ENCODE measurements at regions of chr5 and their contacts with region 1.

Region 1: DNA sequence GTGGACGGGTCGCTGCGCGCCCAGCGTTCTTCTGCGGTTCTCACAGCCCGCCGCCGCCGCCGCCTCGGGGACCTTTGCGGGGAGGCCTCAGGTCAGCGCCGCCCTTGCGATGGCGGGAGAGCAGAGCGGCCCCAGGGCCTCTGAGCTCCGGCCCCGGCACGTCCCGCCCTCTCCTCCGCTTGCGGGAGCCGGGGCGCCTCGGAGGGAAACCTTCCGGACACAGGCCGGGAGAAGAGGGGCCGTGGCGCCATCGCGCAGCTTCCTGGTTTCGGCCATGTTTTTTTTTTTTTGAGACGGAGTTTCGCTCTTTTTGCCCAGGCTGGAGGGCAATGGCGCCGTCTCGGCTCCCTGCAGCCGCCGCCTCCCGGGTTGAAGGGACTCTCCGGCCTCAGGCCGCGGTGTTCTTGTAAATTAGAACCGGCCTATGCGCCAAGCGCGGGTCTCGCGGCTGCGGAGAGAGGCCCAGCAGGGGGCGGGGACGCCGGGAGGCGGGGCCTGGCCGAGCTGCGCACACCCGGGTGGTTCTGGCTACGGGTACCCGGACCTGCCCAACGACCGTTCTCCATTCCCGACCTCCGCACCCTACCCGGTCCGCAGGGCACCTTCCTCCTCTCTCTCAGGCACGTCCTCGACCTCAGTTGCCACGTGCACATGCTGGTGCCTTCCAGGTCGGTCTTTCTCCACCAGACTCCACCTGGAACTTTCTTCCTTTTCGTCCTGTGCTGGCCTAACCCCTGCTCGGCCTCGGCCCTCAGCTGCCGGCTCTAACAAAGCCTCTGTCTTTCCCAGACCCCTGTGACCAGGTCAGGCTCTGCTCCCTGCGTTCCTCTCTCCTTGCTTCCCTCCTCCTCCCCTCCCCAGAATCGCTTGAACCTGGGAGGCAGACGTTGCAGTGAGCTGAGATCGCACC is 28.8 kb upstream of the MGAT1 start:
- DNase-seq: peak; percentile 57 to 86 (median 75)
- ATAC-seq: peak; percentile 45
- H3K4me3 ChIP-seq: peak overlapping the region; percentile 92
- H3K4me3 Mint-ChIP-seq: peak overlapping the region; percentile 99
- H3K27ac ChIP-seq: peak overlapping the region; percentile 94 to 96
- H3K27ac Mint-ChIP-seq: peak overlapping the region; percentile 99
- H3K4me1 ChIP-seq: peaks cover 54% of the 10 kb centered on the region
- H3K4me1 Mint-ChIP-seq: peaks cover 63% of the 10 kb centered on the region
- H3K27me3 ChIP-seq: no peaks in the 10 kb centered on the region
- H3K27me3 Mint-ChIP-seq: no peaks in the 10 kb centered on the region
- CTCF ChIP-seq: no peak

Region 2: GRCh38 chr5:180784497-180785097 is 46.8 kb before region 1 on chr5:
- CTCF ChIA-PET with region 1: interaction called, 14 read pairs
- POLR2A ChIA-PET with region 1: interaction called, 40 read pairs
- intact Hi-C with region 1: loop called (anchors 2 to 10 kb)
- DNase-seq: peak; percentile 59 to 86 (median 74)
- ATAC-seq: peak; percentile 90
- H3K4me3 ChIP-seq: no peak overlapping the region
- H3K4me3 Mint-ChIP-seq: no peak overlapping the region
- H3K27ac ChIP-seq: no peak overlapping the region
- H3K27ac Mint-ChIP-seq: peak overlapping the region; percentile 85
- H3K4me1 ChIP-seq: peaks cover 31% of the 10 kb centered on the region
- H3K4me1 Mint-ChIP-seq: peaks cover 45% of the 10 kb centered on the region
- H3K27me3 ChIP-seq: no peaks in the 10 kb centered on the region
- H3K27me3 Mint-ChIP-seq: no peaks in the 10 kb centered on the region
- CTCF ChIP-seq: peak; percentile 69

Region 3: DNA sequence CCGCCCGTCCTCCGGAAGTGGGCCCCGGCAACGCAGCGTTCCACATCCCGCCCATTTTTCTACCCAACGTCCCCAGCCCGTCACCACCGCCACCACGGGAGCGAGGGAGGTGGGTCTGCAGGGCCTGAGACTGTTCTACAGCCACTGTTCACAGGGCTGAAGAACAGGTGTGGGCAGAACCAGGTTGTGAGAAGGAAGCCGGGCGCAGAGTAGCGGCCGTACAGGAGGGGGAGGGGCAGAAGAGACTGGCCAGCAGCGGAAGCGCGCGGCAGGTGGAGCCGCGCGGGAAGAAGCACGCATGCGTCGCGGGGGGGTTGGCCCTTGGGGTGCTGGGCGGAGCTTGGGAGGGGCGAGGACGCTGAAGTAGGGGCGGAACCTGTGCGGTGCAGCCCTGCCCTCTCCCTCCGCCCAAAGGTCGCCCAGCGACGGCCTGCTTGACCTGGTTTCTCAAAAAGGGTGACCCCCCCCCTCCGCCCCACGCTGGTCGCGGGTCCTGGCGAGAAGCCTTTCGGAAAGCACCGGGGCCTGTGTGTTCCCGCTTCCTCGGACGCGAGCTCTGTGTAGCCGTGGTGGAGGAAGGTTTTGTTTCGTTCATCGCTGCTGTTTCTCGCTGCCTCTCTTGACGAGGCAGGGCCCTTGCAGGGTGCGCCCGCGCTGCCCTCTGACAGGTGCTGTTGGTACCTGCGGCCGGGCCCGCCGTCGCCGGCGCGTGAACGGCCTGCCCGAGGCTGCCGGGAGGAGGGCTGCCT is 21.0 kb before region 1 on chr5:
- CTCF ChIA-PET with region 1: interaction called, 34 read pairs
- POLR2A ChIA-PET with region 1: interaction called, 612 read pairs
- intact Hi-C with region 1: loop called (anchors 1 kb)
- DNase-seq: peak; percentile 94 to 98 (median 97)
- ATAC-seq: peak; percentile 76
- H3K4me3 ChIP-seq: peak overlapping the region; percentile 80
- H3K4me3 Mint-ChIP-seq: peak overlapping the region; percentile 91
- H3K27ac ChIP-seq: peak overlapping the region; percentile 95 to 98
- H3K27ac Mint-ChIP-seq: peak overlapping the region; percentile 94
- H3K4me1 ChIP-seq: peaks cover 58% of the 10 kb centered on the region
- H3K4me1 Mint-ChIP-seq: peaks cover 87% of the 10 kb centered on the region
- H3K27me3 ChIP-seq: no peaks in the 10 kb centered on the region
- H3K27me3 Mint-ChIP-seq: no peaks in the 10 kb centered on the region
- CTCF ChIP-seq: no peak

Region 4: DNA sequence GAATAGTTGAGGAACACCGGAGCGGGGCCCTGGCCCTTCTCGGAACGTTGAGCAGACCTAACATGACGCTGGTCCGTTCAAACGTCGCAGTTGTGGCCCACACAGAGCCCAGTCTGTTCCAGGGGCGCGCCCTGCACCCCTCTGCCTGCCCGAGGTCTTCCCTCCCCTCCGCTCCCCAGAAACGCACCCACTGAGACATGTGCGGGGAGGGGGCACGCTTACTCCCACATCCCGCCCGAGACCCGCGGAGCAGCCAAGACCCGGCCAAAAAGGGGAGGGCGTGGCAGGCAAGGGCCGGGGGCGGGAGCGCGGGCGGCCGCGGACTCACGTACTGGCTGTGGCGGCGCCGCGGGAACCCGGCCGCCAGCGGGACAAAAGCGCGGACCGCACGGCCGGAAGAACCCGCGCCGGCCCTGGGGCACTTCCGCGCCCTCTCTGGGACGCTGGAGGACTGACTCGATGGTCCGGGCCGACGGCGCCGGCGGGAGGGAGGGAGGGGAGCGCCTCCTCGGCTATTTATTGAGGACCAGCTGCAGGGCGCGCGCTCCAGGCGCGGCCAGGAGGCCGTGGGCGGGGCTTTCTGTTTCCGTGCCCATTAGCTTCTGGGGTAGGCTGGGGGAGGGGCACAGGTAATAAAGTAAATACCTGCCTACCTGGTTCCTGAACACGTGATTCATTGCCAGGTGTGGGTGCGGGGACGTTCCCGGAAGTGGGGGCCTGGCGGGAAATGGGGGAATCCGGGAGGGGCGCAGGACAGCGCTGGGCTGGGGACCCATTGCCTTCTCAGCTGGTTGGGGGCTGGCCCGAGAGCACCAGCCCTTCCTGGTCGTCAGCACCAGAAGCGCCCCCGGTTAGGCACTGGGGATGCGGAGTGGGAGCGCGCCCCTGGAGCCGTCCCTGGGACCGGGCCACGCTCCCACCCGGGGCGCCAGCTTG is 29.8 kb after region 1 on chr5 and contains the start of gene ZFP62:
- CTCF ChIA-PET with region 1: interaction called, 10 read pairs
- POLR2A ChIA-PET with region 1: interaction called, 43 read pairs
- intact Hi-C with region 1: loop called (anchors 2 kb)
- DNase-seq: peak; percentile 78 to 94 (median 85)
- ATAC-seq: peak; percentile 73
- H3K4me3 ChIP-seq: peak within 1 kb of the TSS; percentile 89
- H3K4me3 Mint-ChIP-seq: peak within 1 kb of the TSS; percentile 95
- H3K27ac ChIP-seq: peak within 1 kb of the TSS; percentile 85 to 88
- H3K27ac Mint-ChIP-seq: peak within 1 kb of the TSS; percentile 95
- H3K4me1 ChIP-seq: peaks cover 10% of the 10 kb centered on the region
- H3K4me1 Mint-ChIP-seq: peaks cover 27% of the 10 kb centered on the region
- H3K27me3 ChIP-seq: no peaks in the 10 kb centered on the region
- H3K27me3 Mint-ChIP-seq: peaks cover 5% of the 10 kb centered on the region
- CTCF ChIP-seq: peak; percentile 50
- total RNA-seq, gene ZFP62: 22.6 to 24.9 TPM

Region 5: DNA sequence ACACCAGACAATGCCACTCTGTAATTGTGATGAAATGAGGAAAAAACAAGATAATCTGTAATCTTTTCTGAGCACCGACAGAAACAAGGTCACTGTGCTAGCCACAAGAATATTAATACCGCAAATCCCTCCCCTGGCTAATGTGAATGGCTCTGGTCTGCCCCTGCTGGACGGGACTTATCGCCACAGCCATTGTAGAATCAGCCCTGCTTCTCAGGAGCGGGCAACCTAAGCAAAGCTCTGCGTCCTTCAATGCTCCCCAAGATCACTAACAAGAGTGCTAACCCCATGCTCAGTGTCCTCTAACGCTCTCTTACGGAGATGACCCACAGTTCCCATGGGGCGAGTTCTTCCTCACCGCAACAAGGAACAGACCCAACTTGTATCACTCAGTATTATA is 256.9 kb after region 1 on chr5:
- CTCF ChIA-PET with region 1: no interaction called
- POLR2A ChIA-PET with region 1: no interaction called
- intact Hi-C with region 1: no loop called
- DNase-seq: peak in 1 of 14 experiments; percentile 16
- ATAC-seq: no peak
- H3K4me3 ChIP-seq: no peak overlapping the region
- H3K4me3 Mint-ChIP-seq: no peak overlapping the region
- H3K27ac ChIP-seq: no peak overlapping the region
- H3K27ac Mint-ChIP-seq: no peak overlapping the region
- H3K4me1 ChIP-seq: no peaks in the 10 kb centered on the region
- H3K4me1 Mint-ChIP-seq: no peaks in the 10 kb centered on the region
- H3K27me3 ChIP-seq: peaks cover 24 to 42% of the 10 kb centered on the region in 2 experiments
- H3K27me3 Mint-ChIP-seq: peaks cover 66% of the 10 kb centered on the region
- CTCF ChIP-seq: no peak

Region 6: DNA sequence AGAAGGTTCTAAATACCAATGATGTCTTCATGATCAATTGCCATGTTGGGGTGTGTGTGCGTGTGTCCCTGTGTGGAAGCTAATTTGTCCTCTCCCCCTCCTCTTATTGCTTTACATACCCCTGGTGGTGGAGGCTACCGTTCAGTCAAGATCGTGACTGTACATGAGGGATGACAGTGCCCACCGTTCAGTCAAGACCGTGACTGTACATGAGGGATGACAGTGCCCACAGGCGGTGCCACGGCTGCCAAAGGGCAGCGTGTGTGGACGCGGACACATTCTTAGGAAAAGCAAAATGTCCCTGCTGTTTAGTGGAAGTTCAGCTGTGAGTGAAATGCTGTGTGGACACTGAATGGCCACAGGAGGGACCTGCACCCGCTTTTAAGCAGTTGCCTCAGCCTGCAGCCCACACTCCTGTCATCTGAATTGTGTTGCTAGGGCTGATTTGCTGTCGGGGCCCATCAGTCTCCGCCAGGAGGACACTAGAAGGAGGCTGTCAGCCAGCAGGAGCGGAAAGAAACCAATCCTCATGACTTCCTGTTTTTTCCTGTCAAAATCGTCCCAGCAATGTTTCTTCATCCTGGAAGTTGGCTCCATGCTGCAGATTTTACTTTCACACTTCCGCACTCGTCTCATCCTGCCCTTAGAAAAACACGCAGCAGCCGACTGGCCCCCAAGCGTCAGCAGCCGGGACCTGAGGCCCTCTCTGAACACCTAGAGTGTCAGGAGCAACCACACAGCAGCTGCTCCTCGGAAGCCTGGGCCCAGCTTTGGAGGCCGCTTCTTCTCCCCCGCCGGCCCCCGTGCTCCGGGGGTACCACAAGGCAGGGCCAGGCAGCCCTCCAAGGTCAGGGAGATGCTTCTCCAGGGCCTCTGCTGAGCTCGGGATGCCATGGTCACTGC is 290.5 kb after region 1 on chr5:
- CTCF ChIA-PET with region 1: no interaction called
- POLR2A ChIA-PET with region 1: no interaction called
- intact Hi-C with region 1: no loop called
- DNase-seq: no peak
- ATAC-seq: no peak
- H3K4me3 ChIP-seq: no peak overlapping the region
- H3K4me3 Mint-ChIP-seq: no peak overlapping the region
- H3K27ac ChIP-seq: no peak overlapping the region
- H3K27ac Mint-ChIP-seq: no peak overlapping the region
- H3K4me1 ChIP-seq: no peaks in the 10 kb centered on the region
- H3K4me1 Mint-ChIP-seq: no peaks in the 10 kb centered on the region
- H3K27me3 ChIP-seq: peaks cover 29 to 62% of the 10 kb centered on the region in 2 experiments
- H3K27me3 Mint-ChIP-seq: peaks cover 95% of the 10 kb centered on the region
- CTCF ChIP-seq: no peak

Region 7: DNA sequence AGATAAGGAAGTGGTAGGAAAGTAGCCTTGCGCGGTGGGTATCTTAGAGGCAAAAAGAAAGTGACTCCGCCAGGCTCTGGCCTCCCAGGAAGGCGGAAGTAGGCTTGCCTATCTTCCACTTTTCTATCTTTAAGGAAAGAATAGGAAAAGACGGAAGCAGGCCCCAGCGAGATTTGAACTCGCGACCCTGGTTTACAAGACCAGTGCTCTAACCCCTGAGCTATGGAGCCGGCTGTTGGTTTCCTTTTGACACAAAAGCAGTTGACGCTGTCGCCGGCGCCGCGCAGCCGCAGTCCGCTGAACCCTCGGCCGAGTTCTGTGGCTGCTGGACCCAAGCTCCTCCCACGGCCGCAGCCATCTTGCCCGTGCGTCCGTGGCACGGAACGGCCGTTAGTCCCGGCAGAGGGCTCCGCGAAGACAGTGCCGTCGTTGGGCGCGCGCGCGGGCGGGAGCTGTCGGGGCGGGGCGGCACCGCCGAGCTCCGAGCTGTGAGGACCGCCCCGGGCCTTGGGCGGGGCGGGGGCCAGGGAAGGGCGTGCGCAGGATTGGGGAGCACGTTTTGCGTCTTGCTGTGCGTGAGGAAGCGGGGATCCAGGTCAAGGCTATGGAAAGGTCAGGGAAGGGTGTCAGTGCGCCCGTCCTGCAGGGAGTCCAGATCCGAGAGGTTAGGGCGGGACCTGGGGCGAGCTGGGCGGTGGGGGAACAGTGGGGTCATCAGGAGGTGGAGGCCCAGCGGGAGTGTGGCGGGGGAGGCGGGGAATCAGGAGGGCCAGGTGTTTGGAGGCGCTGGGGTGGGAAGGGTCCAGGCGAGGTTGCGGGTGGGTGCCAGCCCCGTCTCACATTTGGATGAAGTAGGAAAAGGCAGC is 360.4 kb after region 1 on chr5:
- CTCF ChIA-PET with region 1: no interaction called
- POLR2A ChIA-PET with region 1: interaction called, 11 read pairs
- intact Hi-C with region 1: no loop called
- DNase-seq: peak; percentile 88 to 99 (median 96)
- ATAC-seq: peak; percentile 45
- H3K4me3 ChIP-seq: peak overlapping the region; percentile 89
- H3K4me3 Mint-ChIP-seq: peak overlapping the region; percentile 99
- H3K27ac ChIP-seq: peak overlapping the region; percentile 52 to 62
- H3K27ac Mint-ChIP-seq: peak overlapping the region; percentile 99
- H3K4me1 ChIP-seq: peaks cover 46% of the 10 kb centered on the region
- H3K4me1 Mint-ChIP-seq: peaks cover 47% of the 10 kb centered on the region
- H3K27me3 ChIP-seq: no peaks in the 10 kb centered on the region
- H3K27me3 Mint-ChIP-seq: peaks cover 35% of the 10 kb centered on the region
- CTCF ChIP-seq: no peak

Measured in CD4-positive, alpha-beta T cell (primary cell).